ENCODE measurements at regions of chr15 and their contacts with region 1.

Region 1: DNA sequence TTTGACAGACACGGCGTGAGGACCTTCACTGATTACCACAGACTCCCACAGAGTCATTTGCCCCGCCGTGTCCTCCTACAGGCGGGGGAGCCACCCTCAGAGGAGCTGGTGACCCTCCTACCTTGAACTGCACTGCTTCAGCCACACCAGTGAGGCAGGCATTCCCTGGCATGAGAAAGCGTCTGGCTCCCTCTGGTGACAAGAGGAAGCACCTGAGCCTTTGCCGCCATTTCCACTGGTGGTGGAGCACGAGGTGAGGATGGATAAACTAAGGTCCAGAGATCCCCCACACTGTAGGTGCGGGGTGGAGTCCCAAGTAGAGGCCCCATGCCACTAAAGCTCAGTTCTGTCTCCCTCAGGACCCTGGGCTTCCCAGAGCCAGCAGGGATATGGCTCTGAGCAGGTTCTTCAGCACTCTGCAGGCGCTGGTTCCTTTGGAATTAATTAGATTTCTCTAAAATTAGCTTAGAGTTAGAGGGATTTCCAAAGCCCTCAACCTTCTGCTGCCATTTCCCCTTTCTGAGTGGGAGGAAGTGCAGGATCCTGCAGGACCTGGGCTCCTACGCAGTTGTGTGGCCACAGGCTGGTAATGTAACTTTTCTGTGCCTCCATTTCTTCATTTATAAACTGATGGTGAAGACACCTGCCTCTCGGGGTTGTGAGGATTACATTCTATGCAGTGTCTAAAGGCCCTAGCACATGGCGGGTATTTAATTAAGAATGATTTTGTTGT is 224.0 kb downstream of the SLCO3A1 start:
- DNase-seq: peak; percentile 63
- H3K4me3 ChIP-seq: no peak overlapping the region
- H3K27ac ChIP-seq: no peak overlapping the region
- H3K4me1 ChIP-seq: peaks cover 61% of the 10 kb centered on the region
- H3K27me3 ChIP-seq: no peaks in the 10 kb centered on the region
- CTCF ChIP-seq: peak; percentile 85

Region 2: DNA sequence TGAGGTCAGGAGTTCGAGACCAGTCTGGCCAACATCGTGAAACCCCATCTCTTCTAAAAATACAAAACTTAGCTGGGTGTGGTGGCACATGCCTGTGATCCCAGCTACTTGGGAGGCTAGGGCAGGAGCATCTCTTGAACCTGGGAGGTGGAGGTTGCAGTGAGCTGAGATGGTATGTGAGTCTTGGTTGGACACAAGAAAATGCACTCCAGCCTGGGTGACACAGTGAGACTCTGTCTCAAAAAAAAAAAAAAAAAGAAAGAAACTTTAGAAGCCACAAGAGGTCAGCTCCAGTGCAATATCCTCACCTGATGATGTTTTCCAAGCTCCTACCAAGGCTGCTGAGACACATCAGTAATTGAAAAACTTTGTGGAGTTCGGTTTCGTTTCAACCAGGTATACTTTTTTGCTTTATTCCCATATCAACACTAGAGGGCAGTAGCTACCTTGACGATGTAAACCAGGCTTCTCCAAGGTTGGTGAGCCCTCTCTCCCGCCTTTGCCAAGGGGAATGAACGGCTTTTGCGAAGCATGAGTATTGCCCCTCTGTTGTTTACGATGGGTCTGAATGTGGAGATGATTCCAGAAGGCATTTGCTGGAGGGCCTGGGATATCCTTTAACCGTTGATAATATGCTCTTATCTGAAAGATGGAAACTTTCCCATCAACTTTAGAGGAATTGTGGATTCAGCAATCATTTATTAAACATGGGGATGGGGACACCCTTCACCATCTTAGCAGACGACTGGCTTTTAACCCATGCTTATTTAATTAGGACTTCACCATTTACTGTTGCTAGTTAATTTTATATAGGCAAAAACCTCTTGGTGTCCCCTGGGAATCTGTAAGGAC is 774.7 kb before region 1 on chr15:
- intact Hi-C with region 1: loop called (anchors 10 kb)
- DNase-seq: no peak
- H3K4me3 ChIP-seq: no peak overlapping the region
- H3K27ac ChIP-seq: no peak overlapping the region
- H3K4me1 ChIP-seq: peaks cover 17% of the 10 kb centered on the region
- H3K27me3 ChIP-seq: peaks cover 27% of the 10 kb centered on the region
- CTCF ChIP-seq: peak; percentile 81

Region 3: GRCh38 chr15:91706322-91707032 is 371.0 kb before region 1 on chr15:
- intact Hi-C with region 1: loop called (anchors 10 kb)
- DNase-seq: peak; percentile 63
- H3K4me3 ChIP-seq: no peak overlapping the region
- H3K27ac ChIP-seq: peak overlapping the region; percentile 40
- H3K4me1 ChIP-seq: peaks cover 12% of the 10 kb centered on the region
- H3K27me3 ChIP-seq: no peaks in the 10 kb centered on the region
- CTCF ChIP-seq: peak; percentile 94

Region 4: DNA sequence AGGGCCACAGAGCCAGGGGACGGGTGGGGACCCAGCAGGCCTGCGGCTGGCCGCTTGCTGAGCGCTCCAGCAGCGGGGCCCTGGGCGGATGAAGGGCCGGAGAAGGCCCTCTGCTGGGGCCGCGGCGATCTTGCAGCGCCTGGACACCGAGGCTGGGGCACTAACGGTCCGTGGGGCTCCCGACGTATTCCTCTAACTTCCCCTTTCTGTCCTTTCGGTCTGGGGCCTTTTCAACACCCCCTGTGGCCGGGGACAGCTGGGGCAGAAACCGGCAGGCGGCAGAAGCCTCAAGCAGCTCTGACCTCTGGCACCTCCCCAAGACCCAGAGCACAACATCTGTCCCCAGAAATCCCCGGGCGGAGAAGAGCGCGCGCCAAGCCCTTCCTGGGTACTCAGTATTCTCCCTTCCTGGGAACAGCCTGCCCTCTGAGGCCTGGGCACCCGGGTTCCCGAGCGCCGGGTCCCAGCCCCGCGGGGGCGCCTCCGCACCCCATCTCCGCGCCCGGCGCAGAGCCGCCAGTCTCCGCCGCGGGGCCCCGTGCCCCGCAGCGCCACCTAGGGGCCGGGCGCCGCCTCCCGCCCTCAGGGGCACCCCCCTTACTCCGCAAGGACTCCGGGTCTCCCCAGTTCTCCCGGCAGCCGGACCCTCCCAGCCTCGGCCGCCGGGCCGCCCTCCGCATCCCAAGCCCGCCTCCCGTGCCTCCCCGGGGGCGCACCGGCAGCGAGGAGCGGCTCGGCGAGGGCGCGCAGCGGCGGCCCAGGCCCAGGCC is 224.6 kb before region 1 on chr15:
- intact Hi-C with region 1: loop called (anchors 10 kb)
- DNase-seq: peak; percentile 83
- H3K4me3 ChIP-seq: peak overlapping the region; percentile 78
- H3K27ac ChIP-seq: peak overlapping the region; percentile 99
- H3K4me1 ChIP-seq: peaks cover 64% of the 10 kb centered on the region
- H3K27me3 ChIP-seq: no peaks in the 10 kb centered on the region
- CTCF ChIP-seq: peak; percentile 74

Region 5: DNA sequence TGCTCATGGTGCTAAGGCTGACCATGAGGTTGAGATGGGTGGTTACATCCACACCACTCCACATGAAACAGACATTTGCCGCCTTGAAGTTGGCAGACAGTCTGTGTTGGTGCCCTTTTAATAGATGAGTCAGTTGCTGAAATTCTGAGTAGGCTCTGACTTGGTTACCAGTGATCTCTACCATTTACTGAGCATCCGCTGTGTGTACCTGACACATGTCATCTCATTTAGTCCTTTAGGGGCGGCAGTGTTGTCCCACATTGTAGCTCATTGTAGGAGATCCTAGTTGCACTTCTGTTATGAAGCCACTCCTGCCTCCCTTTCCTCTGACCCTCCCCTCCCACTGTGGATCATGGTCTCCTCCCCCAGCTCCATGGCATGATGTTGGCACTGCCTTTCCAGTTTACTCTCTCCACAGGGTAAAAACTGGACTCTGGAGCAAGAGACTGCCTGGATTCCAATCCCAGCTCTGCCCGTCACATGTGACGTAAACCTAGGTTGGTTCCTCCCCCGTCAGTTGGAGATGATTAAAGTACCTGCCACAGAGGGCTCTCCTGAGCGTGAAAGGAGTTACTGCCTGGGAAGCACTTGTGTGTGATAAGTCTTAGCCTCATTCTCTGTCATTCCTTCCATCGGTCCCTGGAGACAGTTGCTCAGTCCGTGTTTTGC is 202.4 kb before region 1 on chr15:
- intact Hi-C with region 1: loop called (anchors 10 kb)
- DNase-seq: no peak
- H3K4me3 ChIP-seq: no peak overlapping the region
- H3K27ac ChIP-seq: no peak overlapping the region
- H3K4me1 ChIP-seq: peaks cover 62% of the 10 kb centered on the region
- H3K27me3 ChIP-seq: no peaks in the 10 kb centered on the region
- CTCF ChIP-seq: no peak

Region 6: GRCh38 chr15:92043263-92043662 is 34.3 kb before region 1 on chr15:
- intact Hi-C with region 1: no loop called
- DNase-seq: no peak
- H3K4me3 ChIP-seq: no peak overlapping the region
- H3K27ac ChIP-seq: no peak overlapping the region
- H3K4me1 ChIP-seq: peaks cover 45% of the 10 kb centered on the region
- H3K27me3 ChIP-seq: no peaks in the 10 kb centered on the region
- CTCF ChIP-seq: no peak

Region 7: GRCh38 chr15:92130906-92131305 is 53.4 kb after region 1 on chr15:
- intact Hi-C with region 1: no loop called
- DNase-seq: no peak
- H3K4me3 ChIP-seq: no peak overlapping the region
- H3K27ac ChIP-seq: no peak overlapping the region
- H3K4me1 ChIP-seq: no peaks in the 10 kb centered on the region
- H3K27me3 ChIP-seq: no peaks in the 10 kb centered on the region
- CTCF ChIP-seq: no peak

Region 8: DNA sequence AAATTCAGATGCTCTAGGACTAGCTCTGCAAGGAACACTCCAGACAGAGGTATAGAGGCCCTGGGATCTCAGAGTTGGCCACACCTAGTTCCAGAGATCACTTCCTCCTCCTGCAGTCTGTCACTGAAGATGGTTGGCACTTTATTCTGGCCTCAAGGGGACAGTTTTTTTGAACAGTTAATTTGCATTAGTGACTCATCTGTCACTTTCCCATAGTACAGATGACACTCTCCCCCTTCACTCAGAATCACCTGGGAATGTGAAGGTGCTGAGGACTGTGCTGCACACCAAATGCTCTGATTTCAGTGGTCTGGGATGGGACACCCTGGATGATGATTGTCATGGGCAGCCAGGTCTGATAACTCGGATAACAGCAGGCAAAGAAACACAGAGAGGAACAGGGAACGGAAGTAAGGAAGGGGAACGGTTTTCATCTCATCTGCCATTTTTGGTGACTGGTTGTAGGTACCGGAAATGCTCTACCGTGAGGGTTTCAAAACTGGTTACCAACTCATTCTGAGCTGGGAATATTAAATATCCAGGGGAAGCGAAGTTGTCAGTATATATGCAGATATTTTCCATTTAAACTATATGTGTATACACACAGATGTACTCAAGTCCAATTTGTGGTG is 83.6 kb after region 1 on chr15:
- intact Hi-C with region 1: no loop called
- DNase-seq: no peak
- H3K4me3 ChIP-seq: no peak overlapping the region
- H3K27ac ChIP-seq: no peak overlapping the region
- H3K4me1 ChIP-seq: peaks cover 11% of the 10 kb centered on the region
- H3K27me3 ChIP-seq: no peaks in the 10 kb centered on the region
- CTCF ChIP-seq: no peak

Measured in left ventricle myocardium inferior (tissue), 1 donor.